HepG2 (cell line): ENCODE measurements at regions of chrX and their contacts with region 1.

Region 1: DNA sequence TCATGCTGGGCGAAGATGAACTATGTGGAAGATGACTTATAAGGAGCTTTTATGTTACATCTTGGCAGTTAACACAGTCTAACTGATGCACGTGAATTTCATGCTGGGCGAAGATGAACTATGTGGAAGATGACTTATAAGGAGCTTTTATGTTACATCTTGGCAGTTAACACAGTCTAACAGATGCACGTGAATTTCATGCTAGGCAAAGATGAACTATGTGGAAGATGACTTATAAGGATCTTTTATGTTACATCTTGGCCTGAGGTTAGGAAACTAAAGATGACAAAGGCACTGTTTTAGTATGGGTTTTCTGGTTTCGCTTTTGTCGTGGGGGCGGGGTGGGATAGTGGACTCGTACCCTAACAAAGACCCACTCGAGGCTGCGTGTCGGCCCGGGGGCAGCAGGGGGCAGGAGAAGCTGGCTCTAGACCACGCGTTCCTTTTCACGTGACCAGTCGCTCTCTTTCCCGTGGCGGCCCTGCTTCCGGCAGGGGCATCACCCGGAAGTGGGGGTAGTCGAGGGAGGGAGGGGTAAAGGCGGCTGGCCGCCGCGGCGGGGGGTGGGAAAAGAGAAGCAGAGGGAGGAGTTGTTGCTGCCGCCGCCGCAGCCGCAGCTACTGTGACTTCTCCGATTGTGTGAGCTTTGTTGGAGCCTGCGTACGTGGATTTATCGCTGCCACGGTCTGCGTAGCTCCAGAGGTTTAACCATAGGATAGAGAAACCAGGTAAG is at the start of gene ATP7A:
- DNase-seq: peak; percentile 84
- ATAC-seq: peak; percentile 97
- H3K4me3 ChIP-seq: peak within 1 kb of the TSS; percentile 66 to 77 (median 73)
- H3K27ac ChIP-seq: peak within 1 kb of the TSS; percentile 68
- H3K4me1 ChIP-seq: no peaks in the 10 kb centered on the region
- H3K27me3 ChIP-seq: no peaks in the 10 kb centered on the region
- CTCF ChIP-seq: peak; percentile 84
- EP300 ChIP-seq: peak in 1 of 2 experiments; percentile 27; a peak in 1 of 4 replicates
- POLR2A ChIP-seq: peak; percentile 52 to 53; a peak in 3 of 4 replicates
- RAD21 ChIP-seq: peak; percentile 41; the same call in 1 of the 2 replicates
- total RNA-seq, gene ATP7A: 3.9 and 4.7 TPM in 2 replicates

Region 2: GRCh38 chrX:78024349-78025108 is 114.3 kb after region 1 on chrX:
- CTCF ChIA-PET with region 1: interaction called, 3 read pairs
- POLR2A ChIA-PET with region 1: no interaction called
- in situ Hi-C with region 1: no loop called
- intact Hi-C with region 1: loop called (anchors 1 kb)
- DNase-seq: peak; percentile 45
- ATAC-seq: peak; percentile 95
- H3K4me3 ChIP-seq: peak overlapping the region in 1 of 3 experiments; percentile 12; a peak in 1 of 6 replicates
- H3K27ac ChIP-seq: no peak overlapping the region
- H3K4me1 ChIP-seq: peaks cover 8% of the 10 kb centered on the region; the same call in 1 of the 2 replicates
- H3K27me3 ChIP-seq: no peaks in the 10 kb centered on the region
- CTCF ChIP-seq: peak; percentile 69
- EP300 ChIP-seq: no peak
- POLR2A ChIP-seq: no peak
- RAD21 ChIP-seq: peak; percentile 34